ENCODE measurements at regions of chr10 and their contacts with region 1.

Region 1: DNA sequence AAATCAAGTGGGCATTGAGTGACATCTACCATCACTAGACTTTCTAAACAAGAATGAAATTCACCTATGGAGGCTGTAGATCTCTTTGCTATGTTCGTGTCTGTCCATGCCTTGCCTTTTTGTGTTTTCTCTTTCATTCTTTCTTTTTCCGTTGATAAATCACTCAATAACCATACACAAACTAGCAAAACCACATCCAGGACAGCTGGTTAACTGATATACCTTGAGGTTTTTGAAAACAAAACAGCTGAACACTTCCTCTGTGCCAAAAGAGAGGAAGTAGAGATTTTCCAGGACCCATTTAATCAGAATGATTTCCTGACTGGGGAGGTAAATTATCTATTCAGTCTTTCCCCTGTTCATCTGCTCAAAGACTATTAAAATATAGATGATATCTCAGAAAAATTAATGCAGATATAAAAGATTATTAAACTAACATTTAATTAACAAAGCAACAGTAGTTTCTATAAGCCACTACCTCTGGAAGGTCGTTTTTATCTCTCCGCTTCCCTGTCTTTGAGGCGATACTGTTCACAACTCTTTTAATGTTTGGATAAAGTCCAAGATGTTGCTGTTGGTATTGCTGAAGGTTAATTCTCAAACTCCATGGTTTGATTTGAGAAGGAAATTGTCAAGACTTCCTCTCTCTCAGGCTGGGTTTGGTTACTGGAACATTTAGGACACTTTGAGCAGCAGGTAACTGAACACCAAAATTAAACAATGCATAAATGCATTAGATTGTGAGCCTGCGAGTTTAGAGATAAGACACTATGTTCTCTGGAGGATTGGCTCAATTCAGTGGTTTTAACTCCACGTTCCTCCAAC is 24.4 kb upstream of the C10orf67 start:
- DNase-seq: peak; percentile 24
- H3K4me3 Mint-ChIP-seq: peak overlapping the region; percentile 14
- H3K27ac Mint-ChIP-seq: peak overlapping the region; percentile 73
- H3K4me1 Mint-ChIP-seq: peaks cover 63% of the 10 kb centered on the region
- H3K27me3 Mint-ChIP-seq: no peaks in the 10 kb centered on the region

Region 2: GRCh38 chr10:22163019-22163418 is 1206.0 kb before region 1 on chr10:
- CTCF ChIA-PET with region 1: no interaction called
- intact Hi-C with region 1: no loop called
- DNase-seq: no peak
- H3K4me3 Mint-ChIP-seq: no peak overlapping the region
- H3K27ac Mint-ChIP-seq: no peak overlapping the region
- H3K4me1 Mint-ChIP-seq: peaks cover 16% of the 10 kb centered on the region
- H3K27me3 Mint-ChIP-seq: no peaks in the 10 kb centered on the region

Region 3: DNA sequence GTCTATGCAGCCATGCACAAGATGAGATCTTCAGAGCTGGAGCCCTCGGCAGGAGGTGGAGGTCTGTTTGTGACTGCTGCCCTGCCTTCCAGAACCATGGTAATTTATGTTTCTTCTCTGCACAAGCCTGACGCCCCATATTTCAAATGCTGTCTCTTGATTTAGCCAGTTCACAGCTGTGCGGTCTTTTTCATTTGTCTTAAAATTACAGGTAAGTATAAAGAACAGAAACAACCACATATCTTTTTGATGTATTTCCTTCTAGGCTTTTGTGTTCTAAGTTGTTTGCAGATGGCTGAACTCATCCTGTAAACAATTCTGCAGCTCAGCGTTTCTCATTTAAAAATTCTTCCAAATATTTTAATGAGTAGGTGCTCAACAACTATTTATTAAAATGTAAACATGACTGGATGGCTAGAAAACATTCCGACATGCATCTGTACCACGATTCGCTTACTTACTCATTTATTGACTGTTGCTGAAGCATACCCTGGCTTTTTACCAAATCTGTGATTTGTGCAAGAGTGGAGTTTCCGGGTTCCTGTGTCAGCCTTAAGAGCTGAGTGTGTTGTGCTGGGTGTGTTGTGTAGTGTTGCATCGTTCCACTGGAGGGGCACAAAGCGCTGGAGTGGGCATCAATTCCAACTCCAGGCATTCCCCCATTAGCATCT is 713.6 kb before region 1 on chr10:
- CTCF ChIA-PET with region 1: no interaction called
- intact Hi-C with region 1: loop called (anchors 10 kb)
- DNase-seq: peak; percentile 69
- H3K4me3 Mint-ChIP-seq: peak overlapping the region; percentile 46
- H3K27ac Mint-ChIP-seq: peak overlapping the region; percentile 89
- H3K4me1 Mint-ChIP-seq: peaks cover 99% of the 10 kb centered on the region
- H3K27me3 Mint-ChIP-seq: no peaks in the 10 kb centered on the region

Region 4: GRCh38 chr10:23253780-23254179 is 115.2 kb before region 1 on chr10:
- CTCF ChIA-PET with region 1: no interaction called
- intact Hi-C with region 1: no loop called
- DNase-seq: no peak
- H3K4me3 Mint-ChIP-seq: no peak overlapping the region
- H3K27ac Mint-ChIP-seq: no peak overlapping the region
- H3K4me1 Mint-ChIP-seq: no peaks in the 10 kb centered on the region
- H3K27me3 Mint-ChIP-seq: peaks cover 13% of the 10 kb centered on the region

Region 5: DNA sequence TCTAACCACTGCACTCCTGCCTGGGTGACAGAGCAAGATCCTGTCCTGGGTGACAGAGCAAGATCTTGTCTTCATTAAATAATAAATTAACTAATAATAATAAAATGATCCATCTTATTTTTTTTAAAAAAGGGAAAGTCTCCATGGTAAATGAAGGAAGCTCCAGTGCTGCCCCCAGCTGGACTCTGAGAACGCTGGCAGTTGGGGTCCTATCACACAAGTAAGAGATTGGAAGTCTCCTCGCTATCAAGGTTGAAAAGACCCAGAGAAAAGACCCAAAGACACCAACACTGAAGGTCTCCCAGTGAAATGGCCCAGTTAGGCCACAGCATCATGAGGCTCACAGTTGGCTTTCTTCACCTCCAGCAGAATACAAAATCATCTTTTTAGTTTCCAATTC is 10.7 kb before region 1 on chr10:
- CTCF ChIA-PET with region 1: no interaction called
- intact Hi-C with region 1: no loop called
- DNase-seq: no peak
- H3K4me3 Mint-ChIP-seq: no peak overlapping the region
- H3K27ac Mint-ChIP-seq: no peak overlapping the region
- H3K4me1 Mint-ChIP-seq: peaks cover 18% of the 10 kb centered on the region
- H3K27me3 Mint-ChIP-seq: no peaks in the 10 kb centered on the region

Region 6: DNA sequence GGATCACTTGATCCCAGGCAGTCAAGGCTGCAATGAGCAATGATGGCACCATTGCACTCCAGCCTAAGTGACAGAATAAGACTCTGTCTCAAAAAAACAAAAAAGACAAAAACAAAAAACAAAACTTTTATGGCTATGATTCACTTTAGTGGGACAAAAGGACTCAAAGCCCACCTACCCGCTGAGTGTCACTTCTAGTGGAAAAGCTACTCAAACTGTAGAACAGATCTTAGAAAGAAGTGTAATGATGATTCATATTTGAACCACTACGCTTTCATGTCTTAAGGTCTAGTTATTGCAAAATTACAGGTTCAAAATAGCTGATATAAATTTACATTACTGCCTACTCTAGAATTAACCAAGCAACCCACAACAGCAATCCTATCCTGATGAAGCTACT is 22.8 kb after region 1 on chr10:
- CTCF ChIA-PET with region 1: no interaction called
- intact Hi-C with region 1: loop called (anchors 1 kb)
- DNase-seq: peak; percentile 51
- H3K4me3 Mint-ChIP-seq: no peak overlapping the region
- H3K27ac Mint-ChIP-seq: no peak overlapping the region
- H3K4me1 Mint-ChIP-seq: peaks cover 11% of the 10 kb centered on the region
- H3K27me3 Mint-ChIP-seq: no peaks in the 10 kb centered on the region

Region 7: DNA sequence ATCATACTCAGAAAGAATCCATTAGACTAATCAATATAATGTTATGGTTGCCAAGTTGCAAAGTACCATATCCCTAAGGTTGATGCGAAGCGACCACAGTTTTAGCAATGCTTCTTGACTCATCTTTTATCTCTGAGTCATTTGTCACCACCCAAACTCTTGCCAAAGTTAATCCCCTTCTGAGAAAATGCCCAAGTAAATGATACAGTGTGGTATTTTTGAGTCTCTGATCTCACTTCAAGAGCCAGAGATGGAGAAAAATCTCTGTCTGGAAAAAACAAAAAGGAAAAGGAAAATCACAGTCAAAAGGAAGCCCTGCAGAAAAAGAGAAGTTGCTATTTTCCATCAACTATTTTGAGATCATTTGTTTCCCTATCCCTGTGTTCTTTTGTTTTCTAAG is 43.2 kb after region 1 on chr10:
- CTCF ChIA-PET with region 1: no interaction called
- intact Hi-C with region 1: no loop called
- DNase-seq: peak; percentile 28
- H3K4me3 Mint-ChIP-seq: no peak overlapping the region
- H3K27ac Mint-ChIP-seq: peak overlapping the region; percentile 72
- H3K4me1 Mint-ChIP-seq: peaks cover 28% of the 10 kb centered on the region
- H3K27me3 Mint-ChIP-seq: no peaks in the 10 kb centered on the region

Region 8: GRCh38 chr10:24465891-24466818 is 1097.1 kb after region 1 on chr10:
- CTCF ChIA-PET with region 1: no interaction called
- intact Hi-C with region 1: loop called (anchors 10 kb)
- DNase-seq: peak; percentile 76
- H3K4me3 Mint-ChIP-seq: no peak overlapping the region
- H3K27ac Mint-ChIP-seq: peak overlapping the region; percentile 28
- H3K4me1 Mint-ChIP-seq: peaks cover 31% of the 10 kb centered on the region
- H3K27me3 Mint-ChIP-seq: peaks cover 8% of the 10 kb centered on the region